CD4-positive, alpha-beta T cell (primary cell): ENCODE measurements at regions of chr14 and their contacts with region 1.

Region 1: GRCh38 chr14:22822571-22823098 is 7.1 kb upstream of the MRPL52 start:
- DNase-seq: peak; percentile 46 to 85 (median 64)
- ATAC-seq: peak; percentile 84
- H3K4me3 ChIP-seq: peak overlapping the region; percentile 44
- H3K4me3 Mint-ChIP-seq: peak overlapping the region; percentile 2
- H3K27ac ChIP-seq: no peak overlapping the region
- H3K27ac Mint-ChIP-seq: no peak overlapping the region
- H3K4me1 ChIP-seq: peaks cover 18% of the 10 kb centered on the region
- H3K4me1 Mint-ChIP-seq: peaks cover 23% of the 10 kb centered on the region
- H3K27me3 ChIP-seq: peaks cover 0 to 5% of the 10 kb centered on the region in 2 experiments
- H3K27me3 Mint-ChIP-seq: peaks cover 10% of the 10 kb centered on the region
- CTCF ChIP-seq: peak; percentile 83

Region 2: DNA sequence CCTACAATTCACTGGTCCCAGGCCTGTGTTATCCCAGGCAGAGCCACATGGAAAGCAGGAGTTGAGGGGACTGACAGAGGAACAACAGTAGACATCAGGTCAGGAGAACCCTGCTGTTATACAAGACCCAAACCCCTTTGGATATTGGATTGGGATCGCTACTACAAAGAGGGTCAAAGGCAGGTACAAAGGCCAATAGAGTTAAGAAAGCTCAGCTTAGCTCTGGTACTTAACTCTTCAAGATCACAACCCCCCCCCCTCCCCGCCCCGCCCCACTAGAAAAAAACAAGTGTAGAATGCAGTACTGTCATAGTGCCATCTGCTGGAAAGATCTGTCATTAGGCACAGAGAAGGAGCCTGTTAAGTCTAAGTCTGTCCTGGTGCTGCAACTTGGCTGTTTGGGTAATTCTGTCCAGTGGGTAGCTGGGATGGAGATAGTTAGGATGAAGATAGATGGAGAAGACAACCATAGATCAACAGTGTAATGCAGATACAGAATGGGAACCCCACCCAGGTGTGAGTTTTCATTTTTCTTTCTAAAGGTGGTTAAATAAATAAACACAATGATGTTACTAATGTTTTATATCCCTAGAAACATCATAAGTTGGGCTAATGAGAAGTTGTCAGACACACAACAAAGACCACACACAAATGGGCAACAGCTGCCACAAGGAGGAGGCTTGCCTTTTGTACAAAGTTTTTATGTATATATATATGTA is 77.6 kb after region 1 on chr14:
- CTCF ChIA-PET with region 1: interaction called, 17 read pairs
- POLR2A ChIA-PET with region 1: interaction called, 6 read pairs
- intact Hi-C with region 1: loop called (anchors 1 kb)
- DNase-seq: peak in 13 of 14 experiments; percentile 14 to 87 (median 36)
- ATAC-seq: peak; percentile 92
- H3K4me3 ChIP-seq: no peak overlapping the region
- H3K4me3 Mint-ChIP-seq: no peak overlapping the region
- H3K27ac ChIP-seq: no peak overlapping the region
- H3K27ac Mint-ChIP-seq: no peak overlapping the region
- H3K4me1 ChIP-seq: peaks cover 13% of the 10 kb centered on the region
- H3K4me1 Mint-ChIP-seq: peaks cover 15% of the 10 kb centered on the region
- H3K27me3 ChIP-seq: no peaks in the 10 kb centered on the region
- H3K27me3 Mint-ChIP-seq: no peaks in the 10 kb centered on the region
- CTCF ChIP-seq: peak; percentile 68